ENCODE measurements at regions of chr12 and their contacts with region 1.

Region 1: DNA sequence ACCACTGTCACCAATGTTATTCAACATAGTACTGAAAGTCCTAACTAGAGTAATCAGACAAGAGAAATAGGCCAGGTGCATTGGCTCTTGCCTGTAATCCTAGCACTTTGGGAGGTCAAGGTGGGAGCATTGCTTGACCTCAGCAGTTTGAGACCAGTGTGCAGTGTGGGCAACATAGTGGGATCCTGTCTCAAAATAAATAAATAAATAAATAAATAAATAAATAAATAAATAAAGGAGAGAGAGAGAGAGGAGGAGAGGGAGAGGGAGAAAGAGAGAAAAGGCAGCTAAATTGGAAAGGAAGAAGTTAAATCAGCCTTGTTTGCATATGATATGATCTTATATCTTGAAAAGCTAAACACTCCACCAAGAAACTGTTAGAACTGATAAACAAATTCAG is 115.3 kb downstream of the FAR2 start:
- DNase-seq: no peak
- H3K4me3 ChIP-seq: no peak overlapping the region
- H3K27ac ChIP-seq: no peak overlapping the region
- H3K4me1 ChIP-seq: no peaks in the 10 kb centered on the region
- H3K27me3 ChIP-seq: no peaks in the 10 kb centered on the region
- CTCF ChIP-seq: no peak
- EP300 ChIP-seq: no peak
- POLR2A ChIP-seq: no peak

Region 2: DNA sequence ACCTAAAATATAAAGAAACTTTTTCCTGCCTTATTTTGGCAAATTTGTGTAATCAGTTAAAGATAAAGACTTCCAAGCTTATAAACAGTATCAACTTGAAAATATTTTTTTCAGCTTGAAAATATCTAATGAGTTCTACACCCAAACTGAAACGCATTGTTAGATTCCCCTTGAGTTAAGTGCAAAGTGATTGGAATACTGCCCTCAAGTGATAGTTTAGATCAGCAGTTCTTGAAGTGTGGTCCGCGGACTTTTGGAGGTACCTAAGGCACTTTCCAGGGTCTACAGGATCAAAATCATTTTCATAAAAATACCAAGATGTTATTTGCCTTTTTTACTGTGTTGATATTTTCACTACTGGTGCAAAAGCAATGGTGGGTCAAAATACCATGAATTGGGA is 27.4 kb before region 1 on chr12:
- intact Hi-C with region 1: loop called in 1 of 4 experiments (anchors 2 kb)
- DNase-seq: no peak
- H3K4me3 ChIP-seq: no peak overlapping the region
- H3K27ac ChIP-seq: no peak overlapping the region
- H3K4me1 ChIP-seq: no peaks in the 10 kb centered on the region
- H3K27me3 ChIP-seq: no peaks in the 10 kb centered on the region
- CTCF ChIP-seq: no peak
- EP300 ChIP-seq: no peak
- POLR2A ChIP-seq: no peak

Region 3: DNA sequence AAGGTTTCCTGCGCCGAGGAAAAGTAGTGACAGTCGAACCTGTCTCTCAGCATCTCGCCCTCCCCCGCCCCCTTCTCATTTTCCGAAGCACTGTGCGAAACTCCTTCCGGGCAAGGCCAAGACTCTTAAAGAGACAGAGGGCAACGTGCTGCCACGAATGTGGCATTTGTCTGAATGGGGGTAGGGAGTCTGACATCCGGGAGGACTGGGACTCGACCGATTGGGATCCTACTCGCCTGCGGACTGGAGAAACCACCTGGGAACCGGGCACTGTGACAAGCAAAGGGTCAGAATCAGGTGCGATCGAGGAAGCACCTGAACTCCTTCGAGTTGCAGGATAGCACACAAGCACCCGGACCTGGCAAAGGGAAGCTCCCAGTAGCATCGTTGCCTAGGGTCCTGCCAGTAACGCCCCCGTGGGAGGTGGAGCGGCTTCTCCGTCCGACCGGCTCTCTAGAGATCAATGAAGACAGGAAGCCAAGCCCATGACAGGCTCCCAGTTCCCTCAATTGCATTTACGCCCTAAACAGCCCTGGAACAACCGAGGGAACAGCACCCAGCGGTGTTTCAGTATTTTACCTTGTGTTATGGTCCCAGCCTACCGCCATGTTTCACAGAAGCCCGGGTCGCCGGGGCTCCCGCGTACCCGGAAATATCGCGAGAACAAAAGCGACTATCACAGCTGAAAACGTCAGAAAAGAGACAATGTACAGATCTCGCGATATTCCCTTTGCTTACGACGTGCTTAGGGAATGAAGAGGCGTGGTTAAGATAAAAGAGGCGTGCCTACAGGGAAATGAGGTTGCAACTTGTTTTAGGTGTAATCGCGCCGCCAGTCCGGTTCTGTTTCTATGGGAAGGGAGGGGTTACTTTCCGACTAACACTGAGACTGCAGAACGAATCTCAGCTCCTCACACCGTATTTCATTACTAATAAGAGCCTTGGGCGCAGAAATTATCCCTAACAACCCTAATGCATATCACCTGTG is 116.4 kb after region 1 on chr12 and contains the start of gene ERGIC2:
- intact Hi-C with region 1: no loop called
- DNase-seq: peak; percentile 89 to 94 (median 90)
- H3K4me3 ChIP-seq: peak within 1 kb of the TSS; percentile 66
- H3K27ac ChIP-seq: peak within 1 kb of the TSS; percentile 78 to 80
- H3K4me1 ChIP-seq: no peaks in the 10 kb centered on the region
- H3K27me3 ChIP-seq: no peaks in the 10 kb centered on the region
- CTCF ChIP-seq: no peak
- EP300 ChIP-seq: no peak
- POLR2A ChIP-seq: peak; percentile 61
- total RNA-seq, gene ERGIC2: 21.3 to 75.1 (median 54.1) TPM

Measured in ovary (tissue), 10 donors.